Posterior cingulate gyrus (tissue), 11 donors: ENCODE measurements at regions of chr4 and their contacts with region 1.

Region 1: GRCh38 chr4:176340871-176341685 is 21.3 kb downstream of the SPCS3 start:
- DNase-seq: peak in 2 of 10 donors; percentile 57 to 74

Region 2: DNA sequence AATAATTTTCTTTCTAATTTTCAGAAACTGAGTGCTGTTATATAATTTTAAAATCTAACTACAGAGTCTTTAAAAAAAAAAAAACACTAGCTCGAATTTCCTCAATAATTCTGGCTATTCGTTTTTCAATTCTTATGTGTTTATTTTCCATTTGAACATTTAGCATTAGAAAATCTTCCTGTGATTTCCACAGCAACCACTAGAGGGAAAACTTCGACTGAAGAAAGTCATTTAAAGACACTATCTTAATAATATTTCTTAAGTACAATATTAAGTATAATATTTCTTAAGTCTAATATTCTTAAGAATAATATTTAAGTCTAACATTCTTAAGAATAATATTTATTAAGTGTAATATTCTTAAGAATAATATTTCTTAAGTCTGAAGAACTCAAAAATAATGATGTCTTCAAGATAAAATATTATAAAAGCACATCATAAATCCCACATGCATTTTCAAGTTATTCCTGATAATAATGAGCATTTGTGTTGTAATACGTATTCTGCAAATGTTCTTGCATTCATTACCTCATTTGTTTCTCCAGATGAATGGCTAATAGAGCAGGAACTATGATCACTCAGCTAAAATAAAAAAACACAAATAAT is 393.9 kb before region 1 on chr4:
- intact Hi-C with region 1: loop called (anchors 5 kb)
- DNase-seq: no peak

Region 3: DNA sequence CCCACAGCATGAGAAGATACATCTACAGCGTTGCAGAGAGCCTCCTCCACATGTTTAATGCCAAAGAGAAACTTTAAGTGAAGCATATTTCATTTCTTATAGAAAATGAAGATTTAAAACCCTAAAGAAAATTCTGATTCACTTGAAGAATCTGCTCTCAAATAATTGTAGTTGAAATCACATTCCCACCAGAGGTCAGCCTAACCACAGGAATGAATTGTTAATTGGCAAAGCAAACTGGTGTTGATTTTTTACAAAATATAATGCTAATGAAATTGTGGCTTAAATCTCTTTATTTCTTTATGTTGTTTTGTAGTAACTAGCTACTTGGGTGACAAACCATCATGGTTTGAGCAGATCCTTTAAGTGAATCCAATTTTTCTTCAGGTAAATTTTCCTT is 306.6 kb before region 1 on chr4:
- intact Hi-C with region 1: loop called (anchors 1 kb)
- DNase-seq: peak in 2 of 10 donors; percentile 19 to 28

Region 4: DNA sequence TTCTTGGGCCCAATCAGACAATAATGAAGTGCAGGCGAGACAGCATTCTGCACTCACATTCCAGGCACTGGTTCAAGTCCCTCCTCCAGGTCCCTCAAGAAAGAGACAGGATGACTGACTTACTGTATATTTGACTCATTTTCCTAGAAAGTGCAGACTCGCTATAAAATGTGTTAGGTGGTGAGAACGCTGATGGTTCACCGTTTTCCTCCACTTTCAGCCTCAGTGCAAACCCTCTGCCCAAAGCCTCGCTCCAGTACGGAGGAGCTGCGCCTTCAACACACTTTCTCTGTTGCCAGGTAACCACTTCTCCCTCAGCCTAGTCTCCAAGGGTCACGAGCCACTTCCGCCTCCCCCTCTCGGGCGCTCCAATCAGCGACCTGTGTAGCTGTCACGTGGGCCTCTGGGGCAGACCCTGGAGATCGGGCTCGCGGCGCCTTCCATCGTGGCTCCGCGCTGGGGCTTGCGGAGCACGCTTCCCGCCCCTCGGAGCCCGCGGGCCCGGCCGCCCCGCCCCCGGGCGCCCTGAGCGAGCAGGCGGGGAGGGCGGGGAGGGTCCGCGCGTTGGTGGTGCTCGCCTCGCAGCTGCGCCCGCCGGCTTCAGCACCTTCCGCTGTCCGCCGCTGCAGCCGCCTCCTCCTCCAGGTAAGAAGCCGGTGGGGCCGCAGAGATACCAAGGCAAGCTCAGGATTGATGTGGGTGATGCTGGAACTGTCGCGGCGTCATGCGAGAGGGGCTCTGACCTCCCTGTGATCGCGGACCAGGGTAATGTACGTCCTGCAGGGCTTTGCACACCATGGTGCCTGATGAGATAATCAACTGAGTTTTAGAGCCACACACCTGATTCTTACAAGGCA is 275.4 kb before region 1 on chr4 and contains the start of gene WDR17:
- intact Hi-C with region 1: loop called (anchors 10 kb)
- DNase-seq: peak; percentile 91 to 99 (median 96)

Region 5: DNA sequence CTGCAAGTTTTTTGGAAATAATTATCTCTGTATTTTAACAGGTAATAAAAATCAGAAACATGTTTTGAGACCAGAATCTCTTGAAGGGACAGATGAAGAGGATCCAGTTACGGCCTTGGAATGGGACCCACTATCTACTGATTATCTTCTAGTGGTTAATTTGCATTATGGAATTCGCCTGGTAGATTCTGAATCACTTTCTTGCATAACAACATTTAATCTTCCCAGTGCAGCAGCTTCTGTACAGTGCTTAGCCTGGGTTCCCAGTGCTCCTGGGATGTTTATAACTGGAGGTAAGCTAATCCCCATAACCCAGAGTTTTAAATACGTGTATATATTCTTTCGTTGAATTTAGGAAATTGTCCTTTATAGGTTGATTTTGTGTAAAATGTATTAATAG is 216.0 kb before region 1 on chr4:
- intact Hi-C with region 1: no loop called
- DNase-seq: no peak

Region 6: GRCh38 chr4:176319704-176320339 is 21.3 kb before region 1 on chr4 and contains the start of gene SPCS3:
- intact Hi-C with region 1: loop called (anchors 1 kb)
- DNase-seq: peak; percentile 92 to 100 (median 96)